CD8-positive, alpha-beta memory T cell (primary cell): ENCODE measurements at regions of chr1 and their contacts with region 1.

Region 1: DNA sequence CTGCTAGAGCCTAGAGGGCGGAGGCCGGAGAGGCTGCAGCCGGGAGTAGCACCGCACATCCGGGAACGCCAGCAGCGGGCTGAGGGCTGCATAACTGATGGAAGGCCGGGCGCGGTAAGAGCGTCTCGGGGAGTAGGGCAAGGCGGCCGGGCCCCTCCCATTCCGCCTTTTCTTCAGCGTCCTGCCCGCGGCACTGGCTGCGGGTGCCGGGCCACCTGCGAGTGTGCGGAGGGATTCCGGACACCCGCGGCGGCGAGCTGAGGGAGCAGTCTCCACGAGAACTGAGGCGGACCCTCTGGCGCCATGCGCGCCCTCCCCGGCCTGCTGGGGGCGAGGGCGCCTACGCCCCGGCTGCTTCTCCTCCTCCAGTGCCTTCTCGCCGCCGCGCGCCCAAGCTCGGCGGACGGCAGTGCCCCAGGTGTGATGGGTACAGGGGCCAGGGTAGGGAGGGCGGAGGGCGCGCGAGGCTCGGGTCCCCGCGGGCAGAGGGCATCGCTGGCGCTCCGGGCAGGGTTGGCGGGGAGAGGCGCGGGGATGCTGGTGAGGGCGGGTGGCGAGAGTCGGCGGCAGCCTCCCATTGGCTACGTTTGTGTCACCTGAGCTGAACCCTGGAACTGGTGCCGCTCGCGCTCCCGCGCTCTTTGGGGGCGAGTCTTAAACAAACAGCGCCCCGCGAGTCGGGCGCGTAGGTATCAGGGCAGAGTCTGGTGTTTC is 334.4 kb downstream of the SRGAP2C start:
- DNase-seq: peak; percentile 72 to 90 (median 81)
- H3K4me3 ChIP-seq: peak overlapping the region; percentile 74
- H3K4me3 Mint-ChIP-seq: peak overlapping the region; percentile 76 to 98 (median 96)
- H3K27ac ChIP-seq: peak overlapping the region; percentile 69
- H3K27ac Mint-ChIP-seq: peak overlapping the region; percentile 79 to 99 (median 96)
- H3K4me1 ChIP-seq: peaks cover 41% of the 10 kb centered on the region
- H3K4me1 Mint-ChIP-seq: peaks cover 65 to 77% (median 65%) of the 10 kb centered on the region in 3 donors
- H3K27me3 ChIP-seq: no peaks in the 10 kb centered on the region
- H3K27me3 Mint-ChIP-seq: no peaks in the 10 kb centered on the region

Region 2: DNA sequence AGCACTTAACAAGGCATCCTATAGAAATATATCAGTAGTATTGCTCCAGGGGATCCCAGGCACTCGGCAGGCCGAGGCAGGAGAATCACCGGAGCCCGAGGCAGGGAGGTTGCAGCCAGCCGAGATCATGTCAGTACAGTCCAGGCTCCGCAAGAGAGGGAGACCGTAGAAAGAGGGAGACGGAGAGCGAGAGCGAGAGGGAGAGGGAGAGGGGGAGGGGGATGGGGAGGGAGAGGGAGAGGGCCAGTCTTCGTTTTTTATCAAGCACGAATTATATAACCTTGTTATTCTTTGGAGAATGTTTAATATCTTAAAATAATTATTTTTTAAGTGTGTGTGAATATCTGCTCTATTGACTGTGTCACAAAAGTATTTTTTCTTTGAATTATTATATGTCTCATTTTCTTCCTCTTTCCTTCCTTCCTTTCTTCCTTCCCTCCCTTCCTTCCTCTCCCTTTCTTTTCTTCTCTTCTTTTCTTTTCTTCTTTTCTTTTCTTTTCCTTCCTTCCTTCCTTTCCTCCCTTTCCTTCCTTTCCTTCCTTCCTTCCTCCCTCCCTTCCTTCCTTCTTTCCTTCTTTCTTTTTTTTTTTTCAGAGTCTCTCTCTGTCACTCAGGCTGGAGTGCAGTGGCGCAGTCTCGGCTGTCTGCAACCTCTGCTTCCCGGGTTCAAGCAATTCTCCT is 100.7 kb before region 1 on chr1:
- CTCF ChIA-PET with region 1: no interaction called
- POLR2A ChIA-PET with region 1: no interaction called
- DNase-seq: no peak
- H3K4me3 ChIP-seq: no peak overlapping the region
- H3K4me3 Mint-ChIP-seq: no peak overlapping the region
- H3K27ac ChIP-seq: no peak overlapping the region
- H3K27ac Mint-ChIP-seq: no peak overlapping the region
- H3K4me1 ChIP-seq: no peaks in the 10 kb centered on the region
- H3K4me1 Mint-ChIP-seq: peaks cover 6 to 11% (median 9%) of the 10 kb centered on the region in 3 donors
- H3K27me3 ChIP-seq: no peaks in the 10 kb centered on the region
- H3K27me3 Mint-ChIP-seq: peaks cover 3% of the 10 kb centered on the region in 2 donors

Region 3: DNA sequence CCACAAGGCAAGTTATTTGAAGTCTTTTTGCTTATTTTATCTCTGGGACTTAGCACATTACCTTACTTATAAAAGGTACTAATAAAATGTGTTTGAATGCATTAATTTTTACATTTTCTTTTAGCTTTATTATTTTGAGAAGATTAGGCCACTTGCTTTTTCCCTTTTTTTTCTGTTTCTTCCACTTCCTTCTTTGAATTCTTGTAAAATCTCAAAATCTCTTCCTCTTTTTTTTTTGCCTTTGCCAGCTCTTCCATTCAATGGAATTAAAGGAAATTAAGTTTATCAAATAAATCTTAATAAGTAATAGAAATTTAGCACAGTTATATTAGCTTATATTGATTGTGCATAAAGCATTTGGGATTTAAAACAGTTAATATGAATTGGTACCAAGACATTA is 73.5 kb before region 1 on chr1:
- CTCF ChIA-PET with region 1: interaction called, 13 read pairs
- POLR2A ChIA-PET with region 1: no interaction called
- DNase-seq: no peak
- H3K4me3 ChIP-seq: no peak overlapping the region
- H3K4me3 Mint-ChIP-seq: no peak overlapping the region
- H3K27ac ChIP-seq: no peak overlapping the region
- H3K27ac Mint-ChIP-seq: peak overlapping the region in 1 of 8 donors; percentile 93
- H3K4me1 ChIP-seq: no peaks in the 10 kb centered on the region
- H3K4me1 Mint-ChIP-seq: peaks cover 14 to 28% (median 23%) of the 10 kb centered on the region in 3 donors
- H3K27me3 ChIP-seq: no peaks in the 10 kb centered on the region
- H3K27me3 Mint-ChIP-seq: no peaks in the 10 kb centered on the region

Region 4: GRCh38 chr1:121471523-121471922 is 47.7 kb before region 1 on chr1:
- CTCF ChIA-PET with region 1: no interaction called
- POLR2A ChIA-PET with region 1: no interaction called
- DNase-seq: no peak
- H3K4me3 ChIP-seq: no peak overlapping the region
- H3K4me3 Mint-ChIP-seq: no peak overlapping the region
- H3K27ac ChIP-seq: no peak overlapping the region
- H3K27ac Mint-ChIP-seq: no peak overlapping the region
- H3K4me1 ChIP-seq: no peaks in the 10 kb centered on the region
- H3K4me1 Mint-ChIP-seq: peaks cover 0 to 2% (median 0%) of the 10 kb centered on the region in 3 donors
- H3K27me3 ChIP-seq: no peaks in the 10 kb centered on the region
- H3K27me3 Mint-ChIP-seq: peaks cover 0 to 4% of the 10 kb centered on the region in 2 donors

Region 5: DNA sequence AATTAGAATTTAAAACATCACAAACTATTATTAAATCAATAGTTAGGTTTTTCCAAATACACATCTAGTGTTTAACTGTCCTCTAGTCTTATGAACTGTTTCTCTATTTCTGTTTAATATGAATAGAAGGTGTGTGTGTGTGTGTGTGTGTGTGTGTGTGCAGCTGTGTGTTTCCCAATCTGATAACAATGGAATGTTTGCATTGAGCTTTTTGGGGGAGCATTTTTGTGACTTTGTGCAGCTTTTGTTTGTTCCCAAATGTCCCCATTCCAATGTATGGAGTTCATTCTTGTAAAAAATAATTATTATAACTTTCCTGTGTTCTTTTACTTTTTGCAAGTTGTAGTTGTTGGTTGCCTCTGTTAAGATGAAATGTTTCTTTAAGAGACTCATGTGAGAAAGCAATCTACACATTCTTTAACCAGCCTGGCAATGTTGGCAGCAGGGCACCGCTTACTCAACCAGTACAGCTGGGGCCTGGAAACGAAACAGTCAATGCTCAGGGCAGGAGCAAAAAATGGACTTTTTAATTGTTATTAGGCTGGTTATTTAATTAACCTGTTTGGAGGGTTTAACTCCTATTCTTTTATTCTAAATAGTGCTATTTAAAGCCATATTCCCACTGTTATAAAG is 19.9 kb after region 1 on chr1:
- CTCF ChIA-PET with region 1: no interaction called
- POLR2A ChIA-PET with region 1: no interaction called
- DNase-seq: no peak
- H3K4me3 ChIP-seq: no peak overlapping the region
- H3K4me3 Mint-ChIP-seq: no peak overlapping the region
- H3K27ac ChIP-seq: no peak overlapping the region
- H3K27ac Mint-ChIP-seq: peak overlapping the region in 3 of 8 donors; percentile 10 to 86 (median 38)
- H3K4me1 ChIP-seq: no peaks in the 10 kb centered on the region
- H3K4me1 Mint-ChIP-seq: peaks cover 6 to 16% (median 11%) of the 10 kb centered on the region in 3 donors
- H3K27me3 ChIP-seq: no peaks in the 10 kb centered on the region
- H3K27me3 Mint-ChIP-seq: no peaks in the 10 kb centered on the region

Region 6: GRCh38 chr1:121566346-121566745 is 47.1 kb after region 1 on chr1:
- CTCF ChIA-PET with region 1: no interaction called
- POLR2A ChIA-PET with region 1: no interaction called
- DNase-seq: no peak
- H3K4me3 ChIP-seq: no peak overlapping the region
- H3K4me3 Mint-ChIP-seq: no peak overlapping the region
- H3K27ac ChIP-seq: no peak overlapping the region
- H3K27ac Mint-ChIP-seq: peak overlapping the region in 2 of 8 donors; percentile 38 to 39
- H3K4me1 ChIP-seq: peaks cover 8% of the 10 kb centered on the region
- H3K4me1 Mint-ChIP-seq: peaks cover 18 to 31% (median 21%) of the 10 kb centered on the region in 3 donors
- H3K27me3 ChIP-seq: no peaks in the 10 kb centered on the region
- H3K27me3 Mint-ChIP-seq: peaks cover 0 to 2% of the 10 kb centered on the region in 2 donors